ENCODE measurements at regions of chr5 and their contacts with region 1.

Region 1: DNA sequence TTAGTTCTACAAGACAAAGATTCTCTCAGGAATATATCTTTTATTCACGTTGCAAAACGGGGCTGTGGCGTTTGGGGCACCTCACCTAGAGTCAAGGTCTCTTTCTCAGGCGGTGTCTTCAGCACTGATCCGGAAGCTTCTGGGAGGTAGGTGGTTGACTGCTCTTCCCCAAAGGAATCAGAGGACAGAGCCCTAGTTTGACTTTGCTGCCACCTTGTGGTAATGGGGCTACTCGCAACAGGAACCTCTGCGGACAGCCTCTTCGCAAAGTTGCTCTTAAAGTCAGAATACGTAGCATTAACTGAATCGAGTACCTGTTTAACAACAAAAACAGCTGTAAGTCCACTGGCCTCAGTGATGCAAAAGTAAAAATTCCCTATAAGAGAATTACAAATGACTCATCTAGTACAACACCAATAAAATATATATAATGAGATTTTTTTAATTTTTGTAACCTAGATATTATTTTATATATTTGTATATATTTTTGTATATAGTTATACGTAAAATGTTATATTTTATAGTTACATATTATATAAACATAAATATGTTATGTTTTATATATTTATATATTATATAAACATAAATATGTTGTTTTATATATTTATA is 13.3 kb upstream of the GPX8 start:
- DNase-seq: peak in 9 of 10 donors; percentile 46 to 94 (median 73)

Region 2: DNA sequence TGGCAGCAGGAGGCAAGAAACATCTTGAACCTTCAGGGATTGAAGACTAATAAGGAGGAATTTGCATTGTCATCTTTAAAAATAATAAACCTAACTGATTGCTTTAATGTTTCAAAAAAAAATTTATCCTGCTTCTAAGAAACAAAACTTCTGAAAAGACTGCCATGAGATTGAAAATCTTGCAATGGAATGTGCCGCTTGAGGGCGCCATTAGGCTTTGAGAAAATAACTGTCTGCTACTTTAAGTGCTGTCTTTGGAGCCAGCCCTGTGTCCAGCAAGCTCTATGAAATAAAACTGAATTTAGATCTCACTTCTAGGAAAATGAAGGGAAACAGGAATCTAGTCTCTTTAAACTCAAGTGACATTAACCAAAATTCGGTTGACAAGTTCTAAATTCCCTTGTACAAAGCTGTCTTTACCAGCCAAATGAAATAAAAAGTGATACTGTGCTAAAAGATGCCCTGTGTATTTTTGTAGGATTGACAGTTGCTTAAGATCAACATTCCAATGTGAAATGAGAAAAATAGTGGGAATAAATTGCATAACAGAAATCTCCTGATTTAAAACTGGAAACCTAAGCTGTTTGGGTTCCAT is 240.6 kb before region 1 on chr5:
- intact Hi-C with region 1: loop called (anchors 2 kb)
- DNase-seq: peak in 8 of 10 donors; percentile 34 to 91 (median 68)